Heart left ventricle (tissue), 16 donors: ENCODE measurements at regions of chr21 and their contacts with region 1.

Region 1: GRCh38 chr21:41361786-41362604 is at the start of gene MX2:
- DNase-seq: peak; percentile 79 to 84 (median 81)
- ATAC-seq: peak; percentile 85 to 94 (median 88)
- H3K4me3 ChIP-seq: peak within 1 kb of the TSS; percentile 16 to 70 (median 55)
- H3K27ac ChIP-seq: peak within 1 kb of the TSS; percentile 80 to 98 (median 94)
- H3K4me1 ChIP-seq: peaks cover 0 to 43% (median 16%) of the 10 kb centered on the region in 12 donors
- H3K27me3 ChIP-seq: peaks cover 0 to 4% (median 0%) of the 10 kb centered on the region in 9 donors
- CTCF ChIP-seq: no peak
- POLR2A ChIP-seq: no peak
- total RNA-seq, gene MX2: 4.2 to 23.3 (median 6.0) TPM

Region 2: GRCh38 chr21:41068967-41069642 is 292.9 kb before region 1 on chr21:
- intact Hi-C with region 1: no loop called
- DNase-seq: peak; percentile 75 to 92 (median 87)
- ATAC-seq: peak; percentile 59 to 90 (median 86)
- H3K4me3 ChIP-seq: peak overlapping the region in 10 of 12 donors; percentile 18 to 46 (median 40)
- H3K27ac ChIP-seq: no peak overlapping the region
- H3K4me1 ChIP-seq: peaks cover 0 to 10% (median 6%) of the 10 kb centered on the region in 12 donors
- H3K27me3 ChIP-seq: peaks cover 0 to 24% (median 7%) of the 10 kb centered on the region in 9 donors
- CTCF ChIP-seq: peak; percentile 77 to 95 (median 90)
- POLR2A ChIP-seq: no peak

Region 3: DNA sequence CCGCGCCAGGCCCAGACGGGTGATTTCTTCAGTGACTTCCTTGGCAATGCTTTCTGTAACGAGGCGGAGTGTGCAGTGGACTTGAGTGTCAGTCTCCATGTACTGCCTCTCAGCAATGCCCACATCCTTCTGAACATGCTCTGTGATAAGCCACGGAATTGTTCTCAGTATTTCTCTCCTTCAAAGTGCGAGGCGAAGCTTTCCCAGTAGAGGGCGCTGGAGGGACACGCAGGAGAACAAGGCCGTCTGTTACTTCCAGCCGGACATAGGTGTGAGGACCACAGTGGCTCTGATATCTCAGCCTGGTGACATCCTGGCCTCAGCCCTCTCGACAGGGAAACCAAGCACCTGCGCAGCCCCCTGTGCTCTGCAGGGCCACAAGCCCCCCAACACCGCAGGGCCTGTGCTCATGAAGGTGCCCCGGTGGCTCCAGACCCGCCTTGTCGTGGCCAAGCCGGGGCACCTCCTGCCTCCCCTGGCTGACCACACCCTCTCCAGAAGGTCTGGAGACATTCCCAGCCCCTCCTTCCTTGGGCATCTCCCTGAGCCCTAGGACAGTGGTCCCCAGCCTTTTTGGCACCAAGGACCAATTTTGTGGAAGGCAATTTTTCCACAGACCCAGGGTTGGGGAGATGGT is 240.1 kb before region 1 on chr21:
- intact Hi-C with region 1: no loop called
- DNase-seq: peak; percentile 74 to 85 (median 80)
- ATAC-seq: peak; percentile 47 to 88 (median 86)
- H3K4me3 ChIP-seq: no peak overlapping the region
- H3K27ac ChIP-seq: no peak overlapping the region
- H3K4me1 ChIP-seq: peaks cover 0 to 9% (median 0%) of the 10 kb centered on the region in 12 donors
- H3K27me3 ChIP-seq: peaks cover 0 to 26% (median 5%) of the 10 kb centered on the region in 9 donors
- CTCF ChIP-seq: peak; percentile 78 to 93 (median 88)
- POLR2A ChIP-seq: no peak

Region 4: GRCh38 chr21:41269535-41269934 is 92.5 kb before region 1 on chr21:
- intact Hi-C with region 1: no loop called
- DNase-seq: no peak
- ATAC-seq: no peak
- H3K4me3 ChIP-seq: no peak overlapping the region
- H3K27ac ChIP-seq: no peak overlapping the region
- H3K4me1 ChIP-seq: no peaks in the 10 kb centered on the region
- H3K27me3 ChIP-seq: no peaks in the 10 kb centered on the region
- CTCF ChIP-seq: no peak
- POLR2A ChIP-seq: no peak

Region 5: GRCh38 chr21:41419911-41420862 is 58.2 kb after region 1 on chr21:
- intact Hi-C with region 1: loop called in 5 of 10 experiments (anchors 5 to 10 kb)
- DNase-seq: peak; percentile 84 to 90 (median 86)
- ATAC-seq: peak; percentile 84 to 97 (median 95)
- H3K4me3 ChIP-seq: peak overlapping the region; percentile 40 to 88 (median 68)
- H3K27ac ChIP-seq: peak overlapping the region; percentile 13 to 95 (median 90)
- H3K4me1 ChIP-seq: peaks cover 0 to 36% (median 7%) of the 10 kb centered on the region in 12 donors
- H3K27me3 ChIP-seq: no peaks in the 10 kb centered on the region
- CTCF ChIP-seq: peak in 1 of 12 donors; percentile 15
- POLR2A ChIP-seq: no peak

Region 6: GRCh38 chr21:41425954-41426675 is 64.1 kb after region 1 on chr21 and contains the start of gene MX1:
- intact Hi-C with region 1: loop called in 3 of 10 experiments (anchors 5 kb)
- DNase-seq: peak; percentile 81 to 89 (median 87)
- ATAC-seq: peak; percentile 88 to 96 (median 91)
- H3K4me3 ChIP-seq: peak within 1 kb of the TSS; percentile 27 to 93 (median 80)
- H3K27ac ChIP-seq: peak within 1 kb of the TSS; percentile 70 to 93 (median 85)
- H3K4me1 ChIP-seq: peaks cover 0 to 58% (median 15%) of the 10 kb centered on the region in 12 donors
- H3K27me3 ChIP-seq: peaks cover 0 to 9% (median 0%) of the 10 kb centered on the region in 9 donors
- CTCF ChIP-seq: no peak
- POLR2A ChIP-seq: peak in 1 of 2 donors; percentile 44
- total RNA-seq, gene MX1: 6.3 to 53.9 (median 17.2) TPM